Activated B cell treated with CpG ODN at 0.5 μM for 24 hours (primary cell): ENCODE measurements at regions of chr4 and their contacts with region 1.

Region 1: DNA sequence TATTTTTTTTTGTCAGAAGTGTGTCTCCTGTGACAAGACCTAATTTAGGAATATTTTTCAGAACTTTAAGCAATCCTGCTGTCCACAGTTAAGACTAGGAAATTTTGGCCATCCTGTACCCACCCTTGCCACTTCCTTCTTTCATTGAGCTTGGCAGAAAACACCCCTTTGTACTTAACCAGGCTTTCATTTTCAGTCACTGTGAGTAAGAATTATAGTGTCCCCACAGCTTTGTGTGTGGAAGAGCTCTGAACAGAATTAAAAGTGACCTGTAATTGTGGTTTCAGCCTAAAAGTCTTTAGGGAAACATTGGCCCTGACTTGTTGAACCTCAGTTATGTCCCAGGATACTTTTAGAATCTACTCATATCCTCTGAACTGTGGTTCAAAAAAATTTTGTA is 153.7 kb upstream of the BMP3 start:
- DNase-seq: no peak
- ATAC-seq: peak; percentile 50
- H3K4me3 Mint-ChIP-seq: peak overlapping the region; percentile 51
- H3K27ac Mint-ChIP-seq: peak overlapping the region; percentile 88
- H3K4me1 Mint-ChIP-seq: peaks cover 28% of the 10 kb centered on the region
- H3K27me3 Mint-ChIP-seq: no peaks in the 10 kb centered on the region
- CTCF ChIP-seq: no peak

Region 2: DNA sequence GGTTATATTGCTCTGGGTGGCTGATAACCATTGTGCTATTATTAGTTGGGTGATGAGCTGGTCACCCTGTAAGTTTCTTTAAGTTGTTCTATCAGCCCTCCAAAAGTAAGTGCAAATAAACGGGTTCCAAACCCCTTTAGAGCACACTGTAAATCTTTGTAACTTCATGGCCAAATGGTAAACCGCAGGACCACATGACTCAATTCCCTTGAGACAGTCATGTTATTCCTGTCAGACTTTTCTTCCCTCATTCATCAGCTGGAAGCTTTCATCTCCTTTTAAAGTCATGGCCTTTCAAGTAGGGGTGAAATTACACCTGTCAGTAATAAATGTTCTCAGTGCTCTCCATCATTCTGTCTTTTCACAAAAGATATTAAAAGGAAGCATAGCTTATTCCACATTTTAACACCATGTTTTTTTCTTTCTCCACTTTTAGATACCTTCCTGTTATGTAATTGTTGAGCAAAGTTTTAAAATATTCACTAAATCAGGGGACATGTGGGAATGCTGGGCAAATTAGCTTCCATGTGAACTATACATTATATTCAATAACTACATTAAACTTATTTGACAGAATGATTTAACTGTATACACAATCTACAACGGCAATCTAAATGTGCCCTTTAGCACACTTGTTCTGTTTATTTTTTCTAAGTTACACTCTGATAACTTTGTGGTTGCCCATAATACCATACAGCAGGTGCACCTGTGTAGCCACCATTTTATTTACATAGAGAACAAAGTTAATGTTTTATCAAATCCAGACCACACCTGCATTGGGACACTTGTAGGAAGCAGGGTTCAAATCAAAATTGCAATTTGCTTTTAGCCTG is 265.7 kb before region 1 on chr4:
- CTCF ChIA-PET with region 1: no interaction called
- POLR2A ChIA-PET with region 1: no interaction called
- intact Hi-C with region 1: loop called (anchors 2 kb)
- DNase-seq: peak; percentile 15
- ATAC-seq: peak; percentile 76
- H3K4me3 Mint-ChIP-seq: peak overlapping the region; percentile 52
- H3K27ac Mint-ChIP-seq: peak overlapping the region; percentile 79
- H3K4me1 Mint-ChIP-seq: peaks cover 40% of the 10 kb centered on the region
- H3K27me3 Mint-ChIP-seq: no peaks in the 10 kb centered on the region
- CTCF ChIP-seq: no peak

Region 3: GRCh38 chr4:80913381-80913780 is 36.6 kb after region 1 on chr4:
- CTCF ChIA-PET with region 1: no interaction called
- POLR2A ChIA-PET with region 1: no interaction called
- intact Hi-C with region 1: loop called (anchors 1 kb)
- DNase-seq: no peak
- ATAC-seq: peak; percentile 71
- H3K4me3 Mint-ChIP-seq: no peak overlapping the region
- H3K27ac Mint-ChIP-seq: no peak overlapping the region
- H3K4me1 Mint-ChIP-seq: peaks cover 12% of the 10 kb centered on the region
- H3K27me3 Mint-ChIP-seq: no peaks in the 10 kb centered on the region
- CTCF ChIP-seq: no peak

Region 4: DNA sequence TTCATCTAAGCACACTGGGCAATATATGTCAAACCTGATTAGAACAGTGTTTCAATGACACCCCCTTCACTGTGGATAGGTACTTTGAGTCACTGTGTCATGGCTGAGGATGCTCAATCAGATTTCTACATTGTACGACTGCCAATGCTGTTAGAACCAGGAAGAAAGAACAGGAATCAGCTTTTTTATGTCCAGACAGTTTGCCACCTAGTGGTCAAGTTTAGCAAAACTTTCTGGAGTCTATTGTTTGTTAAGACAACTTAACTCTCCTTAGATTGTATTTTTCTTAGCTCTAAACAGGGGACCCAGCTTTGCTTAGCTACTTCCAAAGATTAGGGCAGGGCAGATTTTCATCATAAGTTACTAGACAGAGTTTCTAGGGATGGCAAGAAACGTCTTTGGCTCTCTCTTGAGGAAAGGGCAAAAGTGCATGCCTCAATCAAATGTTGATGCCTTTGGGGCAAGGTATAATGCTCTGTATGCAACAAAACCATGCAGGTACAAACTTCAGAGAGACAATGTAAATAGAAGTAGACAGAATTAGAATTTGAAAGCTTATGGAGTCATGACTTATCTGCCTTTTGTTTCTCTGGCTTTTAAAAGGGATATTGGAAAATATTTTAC is 113.2 kb after region 1 on chr4:
- CTCF ChIA-PET with region 1: no interaction called
- POLR2A ChIA-PET with region 1: no interaction called
- intact Hi-C with region 1: loop called (anchors 1 kb)
- DNase-seq: no peak
- ATAC-seq: peak; percentile 56
- H3K4me3 Mint-ChIP-seq: no peak overlapping the region
- H3K27ac Mint-ChIP-seq: no peak overlapping the region
- H3K4me1 Mint-ChIP-seq: peaks cover 31% of the 10 kb centered on the region
- H3K27me3 Mint-ChIP-seq: no peaks in the 10 kb centered on the region
- CTCF ChIP-seq: no peak